A549 (cell line): ENCODE measurements at regions of chr16 and their contacts with region 1.

Region 1: DNA sequence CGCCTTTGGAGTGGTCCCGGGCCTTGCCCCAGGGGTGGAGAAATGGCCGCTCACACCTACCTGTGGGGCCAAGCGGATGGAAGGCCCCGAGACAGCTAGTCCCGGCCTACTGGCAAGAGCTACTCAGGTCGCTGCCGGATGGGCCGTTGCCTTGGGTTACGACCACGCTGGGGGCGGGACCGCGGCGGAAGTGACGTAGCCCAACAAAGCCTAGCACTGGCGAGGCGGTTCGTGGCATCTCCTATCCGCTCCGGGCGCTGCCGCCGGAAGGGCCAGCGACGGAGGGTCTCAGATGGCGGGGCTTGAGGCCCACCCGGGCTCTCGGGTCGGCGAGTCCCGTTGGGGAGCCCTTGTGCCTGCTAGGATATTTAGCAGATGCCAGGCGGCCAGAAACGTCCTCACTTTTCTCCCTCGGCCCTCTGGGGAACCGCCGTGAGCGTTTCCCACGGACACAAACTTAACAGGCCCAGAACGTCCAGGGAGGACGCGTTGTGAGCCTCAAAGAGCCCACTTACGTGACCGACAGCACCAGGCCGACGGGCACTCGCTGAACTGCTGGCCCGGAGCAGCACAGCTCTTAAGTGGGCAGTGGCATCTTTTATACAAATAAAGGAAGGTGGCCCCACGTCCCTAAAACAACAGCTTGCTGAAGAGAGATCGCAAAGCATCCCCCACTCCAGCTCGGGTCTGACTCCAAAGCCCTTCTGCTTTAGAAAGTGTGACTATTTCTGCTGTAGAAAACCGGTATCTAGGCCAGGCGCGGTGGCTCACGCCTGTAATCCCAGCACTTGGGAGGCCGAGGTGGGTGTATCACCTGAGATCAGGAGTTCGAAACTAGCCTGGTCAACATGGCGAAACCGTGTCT is at the start of gene C16orf46:
- DNase-seq: peak; percentile 97 to 98
- ATAC-seq: peak; percentile 96 to 97
- H3K4me3 ChIP-seq: peak within 1 kb of the TSS; percentile 61
- H3K27ac ChIP-seq: peak within 1 kb of the TSS; percentile 79 to 90
- H3K4me1 ChIP-seq: peaks cover 5% of the 10 kb centered on the region; the same call in 1 of the 3 replicates
- CTCF ChIP-seq: no peak
- EP300 ChIP-seq: no peak
- POLR2A ChIP-seq: peak; percentile 80
- RAD21 ChIP-seq: 0 out of 5 replicates have a peak, but pooled peaks of 1 of the 2 experiments have one; percentile 15
- polyA plus RNA-seq, gene C16orf46: 1.3 and 1.4 TPM in 2 replicates

Region 2: GRCh38 chr16:80938035-80938865 is 139.1 kb before region 1 on chr16:
- CTCF ChIA-PET with region 1: no interaction called
- POLR2A ChIA-PET with region 1: no interaction called
- DNase-seq: peak in 1 of 2 experiments; percentile 50
- ATAC-seq: peak; percentile 19 to 66; a peak in 3 of 6 replicates
- H3K4me3 ChIP-seq: no peak overlapping the region
- H3K27ac ChIP-seq: no peak overlapping the region
- H3K4me1 ChIP-seq: no peaks in the 10 kb centered on the region
- CTCF ChIP-seq: no peak
- EP300 ChIP-seq: no peak
- POLR2A ChIP-seq: no peak
- RAD21 ChIP-seq: no peak

Region 3: DNA sequence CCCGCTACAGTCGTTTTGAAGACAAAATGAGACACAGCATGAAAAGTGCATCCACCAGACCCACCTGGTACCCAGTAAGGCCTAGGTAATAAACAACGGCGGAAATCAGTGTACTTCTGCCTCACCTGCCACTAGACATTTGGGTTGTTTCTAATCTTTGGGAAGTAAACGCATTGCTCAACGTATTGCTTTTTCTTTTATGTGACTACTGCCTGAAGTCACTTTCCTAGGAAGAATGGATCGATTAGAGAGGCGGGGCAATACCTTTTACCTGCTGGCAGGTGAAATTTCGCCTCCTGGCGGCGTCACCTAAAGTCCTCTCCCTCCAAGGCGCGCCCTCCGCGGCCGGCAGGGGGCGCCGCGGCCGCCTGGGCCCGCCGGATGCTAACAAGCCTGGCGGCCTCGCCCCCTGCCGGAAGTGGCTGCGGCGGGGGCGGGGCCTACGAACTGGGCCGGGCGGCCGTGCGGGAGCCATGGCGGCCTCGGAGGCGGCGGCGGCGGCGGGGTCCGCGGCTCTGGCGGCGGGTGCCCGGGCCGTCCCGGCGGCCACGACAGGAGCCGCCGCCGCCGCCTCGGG is 41.8 kb before region 1 on chr16 and contains the start of gene ATMIN:
- CTCF ChIA-PET with region 1: interaction called, 9 read pairs
- POLR2A ChIA-PET with region 1: interaction called, 14 read pairs
- DNase-seq: peak; percentile 83 to 85
- ATAC-seq: peak; percentile 96
- H3K4me3 ChIP-seq: peak within 1 kb of the TSS; percentile 94
- H3K27ac ChIP-seq: peak within 1 kb of the TSS; percentile 86 to 96
- H3K4me1 ChIP-seq: peaks cover 9% of the 10 kb centered on the region; the same call in 1 of the 3 replicates
- CTCF ChIP-seq: peak; percentile 100
- EP300 ChIP-seq: no peak
- POLR2A ChIP-seq: peak; percentile 62
- RAD21 ChIP-seq: peak; percentile 52 to 82
- polyA plus RNA-seq, gene ATMIN: 50.4 and 56.4 TPM in 2 replicates

Region 4: DNA sequence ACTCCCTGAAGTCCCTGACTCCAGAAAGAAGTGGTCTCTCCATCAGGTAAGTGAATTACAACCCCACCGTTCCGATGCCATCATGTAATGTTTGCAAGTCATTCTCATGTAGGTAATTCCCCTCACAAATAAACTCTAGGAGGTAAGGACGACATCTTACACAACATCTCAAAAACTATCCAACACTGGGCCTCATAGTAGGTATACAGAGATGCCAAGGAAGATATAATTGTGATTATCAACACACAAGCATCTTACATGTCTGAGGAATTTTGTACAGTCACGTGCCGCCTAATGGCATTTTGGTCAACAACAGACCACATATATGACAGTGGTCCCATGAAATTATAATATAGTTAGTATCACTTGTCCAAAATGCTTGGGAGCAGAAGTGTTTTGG is 11.5 kb after region 1 on chr16:
- CTCF ChIA-PET with region 1: no interaction called
- POLR2A ChIA-PET with region 1: interaction called, 10 read pairs
- DNase-seq: no peak
- ATAC-seq: no peak
- H3K4me3 ChIP-seq: no peak overlapping the region
- H3K27ac ChIP-seq: no peak overlapping the region
- H3K4me1 ChIP-seq: no peaks in the 10 kb centered on the region
- CTCF ChIP-seq: no peak
- EP300 ChIP-seq: no peak
- POLR2A ChIP-seq: no peak
- RAD21 ChIP-seq: no peak

Region 5: GRCh38 chr16:81181013-81181720 is 103.9 kb after region 1 on chr16:
- CTCF ChIA-PET with region 1: no interaction called
- POLR2A ChIA-PET with region 1: interaction called, 16 read pairs
- DNase-seq: peak; percentile 93 to 94
- ATAC-seq: peak; percentile 89 to 96
- H3K4me3 ChIP-seq: peak overlapping the region; percentile 35
- H3K27ac ChIP-seq: peak overlapping the region; percentile 83 to 94
- H3K4me1 ChIP-seq: peaks cover 42% of the 10 kb centered on the region
- CTCF ChIP-seq: no peak
- EP300 ChIP-seq: peak in 1 of 2 experiments; percentile 24; a peak in 1 of 5 replicates
- POLR2A ChIP-seq: no peak
- RAD21 ChIP-seq: 0 out of 5 replicates have a peak, but pooled peaks of 1 of the 2 experiments have one; percentile 13